Breast epithelium (tissue), 4 donors: ENCODE measurements at regions of chr16 and their contacts with region 1.

Region 1: DNA sequence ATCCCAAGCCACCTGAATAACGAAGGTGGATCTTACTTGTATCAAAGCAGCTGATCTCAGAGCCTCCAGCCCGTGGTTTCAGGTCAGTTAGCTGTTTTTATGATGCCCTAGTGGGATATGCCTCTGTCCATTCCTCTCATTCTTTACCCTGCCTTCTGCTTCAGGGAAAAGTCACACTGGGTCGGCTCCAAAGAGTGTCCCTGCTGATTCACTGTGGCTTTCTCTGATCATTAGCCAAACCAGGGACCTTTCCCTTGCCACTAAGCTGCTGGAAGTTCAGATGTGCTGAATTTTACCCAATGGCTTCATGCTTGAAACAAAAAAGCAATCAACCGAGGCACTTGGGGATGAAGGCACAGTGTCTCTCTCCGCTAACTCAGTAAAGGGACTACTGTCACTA is 170.2 kb upstream of the SALL1 start:
- DNase-seq: no peak
- H3K4me3 ChIP-seq: no peak overlapping the region
- H3K27ac ChIP-seq: no peak overlapping the region
- H3K4me1 ChIP-seq: no peaks in the 10 kb centered on the region
- H3K27me3 ChIP-seq: no peaks in the 10 kb centered on the region
- CTCF ChIP-seq: no peak
- POLR2A ChIP-seq: no peak

Region 2: GRCh38 chr16:51888016-51888415 is 566.8 kb after region 1 on chr16:
- intact Hi-C with region 1: loop called (anchors 5 kb)
- DNase-seq: no peak
- H3K4me3 ChIP-seq: no peak overlapping the region
- H3K27ac ChIP-seq: no peak overlapping the region
- H3K4me1 ChIP-seq: no peaks in the 10 kb centered on the region
- H3K27me3 ChIP-seq: peaks cover 0 to 2% of the 10 kb centered on the region in 2 donors
- CTCF ChIP-seq: no peak
- POLR2A ChIP-seq: no peak